PC-3 (cell line): ENCODE measurements at regions of chr1 and their contacts with region 1.

Region 1: GRCh38 chr1:218705911-218706893 is 361.1 kb downstream of the TGFB2 start:
- DNase-seq: peak; percentile 100
- ATAC-seq: peak; percentile 85
- H3K4me3 ChIP-seq: no peak overlapping the region
- H3K27ac ChIP-seq: peak overlapping the region; percentile 88
- H3K4me1 ChIP-seq: peaks cover 42% of the 10 kb centered on the region
- H3K27me3 ChIP-seq: no peaks in the 10 kb centered on the region
- CTCF ChIP-seq: no peak

Region 2: GRCh38 chr1:218377143-218377660 is 329.0 kb before region 1 on chr1:
- CTCF ChIA-PET with region 1: no interaction called
- POLR2A ChIA-PET with region 1: no interaction called
- intact Hi-C with region 1: loop called (anchors 1 kb)
- DNase-seq: peak; percentile 100
- ATAC-seq: peak; percentile 64
- H3K4me3 ChIP-seq: peak overlapping the region; percentile 57
- H3K27ac ChIP-seq: peak overlapping the region; percentile 91
- H3K4me1 ChIP-seq: peaks cover 90% of the 10 kb centered on the region
- H3K27me3 ChIP-seq: no peaks in the 10 kb centered on the region
- CTCF ChIP-seq: no peak

Region 3: DNA sequence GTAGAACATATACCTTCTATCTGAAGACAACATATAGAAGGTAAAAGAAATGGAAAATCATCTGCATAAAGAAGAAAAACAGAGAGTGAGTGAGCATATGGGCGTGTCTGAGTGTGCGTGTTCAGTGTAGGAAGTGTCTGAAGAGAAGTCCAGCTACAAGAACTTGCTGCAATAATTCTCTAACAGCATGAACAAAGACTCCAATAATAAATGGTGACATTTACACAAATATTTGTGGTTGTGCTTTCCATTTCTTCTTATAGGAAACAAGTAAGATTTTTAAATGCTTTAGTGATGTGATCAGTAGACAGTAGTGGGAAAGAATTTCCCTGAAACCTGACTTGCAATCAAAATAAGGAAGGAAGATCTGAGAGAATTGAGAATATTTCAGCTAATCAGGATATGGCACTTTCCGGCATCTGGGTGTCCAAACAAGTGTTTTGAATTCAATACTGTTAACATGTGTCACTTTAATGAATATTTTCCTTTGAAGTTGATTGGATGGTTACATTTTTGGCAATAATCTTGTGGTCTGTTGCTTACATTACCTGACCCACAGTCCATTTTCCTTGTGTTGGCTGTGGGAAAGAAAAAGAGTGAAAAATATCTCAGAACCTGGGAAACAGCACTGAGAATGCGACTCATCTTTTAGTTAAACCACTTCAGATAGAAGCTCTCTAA is 207.1 kb before region 1 on chr1:
- CTCF ChIA-PET with region 1: no interaction called
- POLR2A ChIA-PET with region 1: no interaction called
- intact Hi-C with region 1: loop called (anchors 1 kb)
- DNase-seq: peak; percentile 83
- ATAC-seq: peak; percentile 29
- H3K4me3 ChIP-seq: peak overlapping the region; percentile 51
- H3K27ac ChIP-seq: peak overlapping the region; percentile 74
- H3K4me1 ChIP-seq: peaks cover 47% of the 10 kb centered on the region
- H3K27me3 ChIP-seq: no peaks in the 10 kb centered on the region
- CTCF ChIP-seq: no peak

Region 4: GRCh38 chr1:218658899-218659298 is 47.3 kb before region 1 on chr1:
- CTCF ChIA-PET with region 1: interaction called, 5 read pairs
- POLR2A ChIA-PET with region 1: no interaction called
- intact Hi-C with region 1: loop called (anchors 1 kb)
- DNase-seq: peak; percentile 95
- ATAC-seq: peak; percentile 72
- H3K4me3 ChIP-seq: no peak overlapping the region
- H3K27ac ChIP-seq: peak overlapping the region; percentile 71
- H3K4me1 ChIP-seq: peaks cover 64% of the 10 kb centered on the region
- H3K27me3 ChIP-seq: no peaks in the 10 kb centered on the region
- CTCF ChIP-seq: no peak

Region 5: DNA sequence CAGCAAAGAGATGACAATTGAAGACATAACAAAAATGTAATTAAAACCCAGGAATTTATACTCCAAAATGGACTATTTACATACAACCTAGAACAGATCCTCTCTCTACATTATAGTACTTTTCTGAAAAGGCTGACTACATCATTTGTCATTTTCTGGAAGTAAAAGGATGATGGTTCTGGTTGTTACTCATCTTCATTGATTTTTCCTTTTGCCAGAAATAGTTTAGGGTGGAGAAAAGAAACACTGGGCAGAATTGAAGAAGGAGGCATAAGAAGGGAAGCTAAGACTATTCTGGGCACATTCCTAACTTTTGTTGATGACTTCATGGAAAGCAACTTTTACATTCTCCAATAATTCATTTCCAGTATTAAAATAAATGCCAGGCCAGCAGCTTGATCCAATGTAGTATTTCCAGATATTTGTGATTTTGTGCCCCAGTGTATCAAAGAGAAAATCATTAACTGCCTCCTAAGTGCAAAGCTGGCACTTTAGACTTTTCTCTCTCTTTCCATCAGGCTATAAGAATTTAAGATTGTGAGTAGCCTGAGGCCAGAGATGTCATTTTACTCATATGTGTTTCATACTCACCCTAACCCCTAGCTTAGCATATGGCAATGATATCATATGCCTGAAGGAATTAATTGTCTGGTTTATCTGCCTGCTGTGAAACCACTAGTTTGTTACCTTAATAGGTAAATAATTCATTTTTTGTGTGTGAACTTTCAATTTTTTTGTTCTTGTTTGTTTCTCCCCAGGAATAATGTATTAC is 98.0 kb after region 1 on chr1:
- CTCF ChIA-PET with region 1: no interaction called
- POLR2A ChIA-PET with region 1: interaction called, 4 read pairs
- intact Hi-C with region 1: loop called (anchors 1 kb)
- DNase-seq: peak; percentile 93
- ATAC-seq: peak; percentile 92
- H3K4me3 ChIP-seq: no peak overlapping the region
- H3K27ac ChIP-seq: peak overlapping the region; percentile 77
- H3K4me1 ChIP-seq: peaks cover 31% of the 10 kb centered on the region
- H3K27me3 ChIP-seq: no peaks in the 10 kb centered on the region
- CTCF ChIP-seq: no peak

Region 6: DNA sequence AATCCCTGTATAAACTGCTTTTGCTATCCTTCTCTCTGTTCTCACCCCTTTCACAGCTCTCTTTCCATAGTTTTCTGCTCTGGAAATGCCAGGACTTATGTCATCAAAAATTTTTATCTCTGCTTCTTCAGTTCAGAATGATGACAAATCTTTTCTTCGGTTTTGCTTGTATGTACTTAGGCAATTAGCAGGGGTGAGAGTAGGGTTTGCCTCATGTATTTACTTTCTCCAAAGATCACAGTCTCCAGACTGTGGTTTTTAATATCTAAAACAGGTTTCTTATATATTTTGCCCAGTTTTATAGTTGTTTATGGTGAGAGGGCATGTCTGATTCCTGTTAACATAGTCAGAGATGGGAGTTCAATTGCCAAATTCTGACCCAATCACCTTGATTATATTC is 232.1 kb after region 1 on chr1:
- CTCF ChIA-PET with region 1: no interaction called
- POLR2A ChIA-PET with region 1: no interaction called
- intact Hi-C with region 1: loop called (anchors 2 kb)
- DNase-seq: peak; percentile 83
- ATAC-seq: peak; percentile 72
- H3K4me3 ChIP-seq: no peak overlapping the region
- H3K27ac ChIP-seq: peak overlapping the region; percentile 70
- H3K4me1 ChIP-seq: peaks cover 24% of the 10 kb centered on the region
- H3K27me3 ChIP-seq: no peaks in the 10 kb centered on the region
- CTCF ChIP-seq: no peak

Region 7: GRCh38 chr1:219173758-219174588 is 467.8 kb after region 1 on chr1 and contains the start of gene LYPLAL1:
- CTCF ChIA-PET with region 1: no interaction called
- POLR2A ChIA-PET with region 1: no interaction called
- intact Hi-C with region 1: loop called (anchors 1 kb)
- DNase-seq: peak; percentile 98
- ATAC-seq: peak; percentile 75
- H3K4me3 ChIP-seq: peak within 1 kb of the TSS; percentile 69
- H3K27ac ChIP-seq: peak within 1 kb of the TSS; percentile 23
- H3K4me1 ChIP-seq: peaks cover 47% of the 10 kb centered on the region
- H3K27me3 ChIP-seq: no peaks in the 10 kb centered on the region
- CTCF ChIP-seq: peak; percentile 51; the same call in 1 of the 2 replicates
- total RNA-seq, gene LYPLAL1: 15.8 and 21.3 TPM in 2 replicates